ENCODE measurements at regions of chr11 and their contacts with region 1.

Region 1: GRCh38 chr11:79708300-79708932 is 267.6 kb upstream of the TENM4 start:
- DNase-seq: peak; percentile 62 to 71
- H3K4me3 ChIP-seq: no peak overlapping the region
- H3K4me3 Mint-ChIP-seq: no peak overlapping the region
- H3K27ac Mint-ChIP-seq: no peak overlapping the region
- H3K4me1 ChIP-seq: no peaks in the 10 kb centered on the region
- H3K4me1 Mint-ChIP-seq: no peaks in the 10 kb centered on the region
- H3K27me3 ChIP-seq: no peaks in the 10 kb centered on the region
- H3K27me3 Mint-ChIP-seq: no peaks in the 10 kb centered on the region
- CTCF ChIP-seq: peak; percentile 77 to 84

Region 2: GRCh38 chr11:79686703-79687414 is 21.6 kb before region 1 on chr11:
- CTCF ChIA-PET with region 1: no interaction called
- POLR2A ChIA-PET with region 1: no interaction called
- intact Hi-C with region 1: no loop called
- DNase-seq: no peak
- H3K4me3 ChIP-seq: no peak overlapping the region
- H3K4me3 Mint-ChIP-seq: no peak overlapping the region
- H3K27ac Mint-ChIP-seq: no peak overlapping the region
- H3K4me1 ChIP-seq: no peaks in the 10 kb centered on the region
- H3K4me1 Mint-ChIP-seq: no peaks in the 10 kb centered on the region
- H3K27me3 ChIP-seq: no peaks in the 10 kb centered on the region
- H3K27me3 Mint-ChIP-seq: peaks cover 2% of the 10 kb centered on the region
- CTCF ChIP-seq: no peak

Region 3: DNA sequence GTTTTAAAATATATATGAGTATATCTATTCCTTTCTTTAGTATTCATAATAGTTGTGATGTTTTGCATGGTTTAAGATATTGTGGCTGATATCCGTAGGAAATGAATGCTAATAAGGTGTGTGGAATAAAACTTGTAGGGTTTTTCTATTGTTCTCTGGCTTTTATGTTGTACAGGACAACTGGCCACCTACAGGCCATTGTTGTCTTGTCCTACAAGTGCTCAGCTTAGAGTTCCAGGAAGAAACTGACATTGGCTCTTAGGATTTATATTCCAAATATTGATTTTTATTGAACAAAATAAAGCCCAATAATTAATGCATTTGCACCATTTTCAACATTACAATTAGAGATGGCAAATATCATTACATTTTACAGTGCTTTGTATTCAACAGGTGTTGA is 245.2 kb after region 1 on chr11:
- CTCF ChIA-PET with region 1: no interaction called
- POLR2A ChIA-PET with region 1: no interaction called
- intact Hi-C with region 1: loop called (anchors 10 kb)
- DNase-seq: no peak
- H3K4me3 ChIP-seq: no peak overlapping the region
- H3K4me3 Mint-ChIP-seq: no peak overlapping the region
- H3K27ac Mint-ChIP-seq: no peak overlapping the region
- H3K4me1 ChIP-seq: no peaks in the 10 kb centered on the region
- H3K4me1 Mint-ChIP-seq: no peaks in the 10 kb centered on the region
- H3K27me3 ChIP-seq: no peaks in the 10 kb centered on the region
- H3K27me3 Mint-ChIP-seq: peaks cover 2% of the 10 kb centered on the region
- CTCF ChIP-seq: peak in 1 of 2 experiments; percentile 42

Region 4: DNA sequence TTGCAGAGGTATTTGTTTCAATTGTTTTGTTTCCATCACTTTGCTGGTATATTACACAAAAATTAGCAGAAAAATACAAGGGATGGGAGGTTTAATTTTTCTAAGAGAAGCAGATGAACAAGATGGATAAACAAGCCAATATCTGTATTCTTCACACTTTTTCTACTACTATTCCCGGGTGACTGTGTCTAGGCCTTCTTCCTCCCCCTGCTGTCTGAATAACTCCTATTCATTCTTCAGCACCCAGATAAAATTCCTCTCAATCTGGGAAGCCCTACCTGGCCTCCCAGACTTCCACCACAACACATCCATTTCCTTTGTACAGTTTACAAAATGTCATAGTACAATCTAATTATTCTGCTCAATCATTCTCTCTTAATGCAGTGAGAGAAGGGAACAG is 399.0 kb after region 1 on chr11:
- CTCF ChIA-PET with region 1: no interaction called
- POLR2A ChIA-PET with region 1: no interaction called
- intact Hi-C with region 1: loop called (anchors 1 kb)
- DNase-seq: no peak
- H3K4me3 ChIP-seq: no peak overlapping the region
- H3K4me3 Mint-ChIP-seq: no peak overlapping the region
- H3K27ac Mint-ChIP-seq: no peak overlapping the region
- H3K4me1 ChIP-seq: no peaks in the 10 kb centered on the region; the same call in 1 of the 2 replicates
- H3K4me1 Mint-ChIP-seq: no peaks in the 10 kb centered on the region
- H3K27me3 ChIP-seq: no peaks in the 10 kb centered on the region
- H3K27me3 Mint-ChIP-seq: peaks cover 11% of the 10 kb centered on the region
- CTCF ChIP-seq: peak in 1 of 2 experiments; percentile 24

Region 5: DNA sequence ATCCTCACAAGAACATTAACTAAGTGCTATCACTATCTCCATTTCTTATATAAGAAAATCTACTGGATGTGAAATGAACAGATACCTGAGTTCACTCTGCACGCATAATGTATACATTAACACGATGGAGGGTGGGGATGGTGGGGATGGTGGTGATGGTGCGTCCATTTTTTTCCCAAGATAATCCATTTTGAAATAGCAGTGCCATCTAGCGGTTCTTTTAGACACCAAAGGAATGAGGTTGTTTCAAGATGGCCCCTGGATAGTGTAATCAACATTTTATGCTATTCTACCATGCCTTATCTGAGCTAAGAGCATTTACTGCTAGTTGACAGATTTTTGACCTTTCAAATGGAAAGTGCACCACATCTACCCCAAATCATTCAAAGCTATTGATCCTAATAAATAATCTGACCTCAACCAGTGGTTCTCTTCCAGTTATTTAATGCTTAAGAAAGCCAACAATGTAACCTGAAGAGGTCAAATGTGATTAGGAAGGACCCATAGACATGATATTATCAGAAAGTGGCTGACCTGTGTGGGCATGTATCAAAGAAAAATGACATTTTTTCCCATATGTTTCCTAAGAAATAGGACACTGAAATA is 447.1 kb after region 1 on chr11:
- CTCF ChIA-PET with region 1: interaction called, 3 read pairs
- POLR2A ChIA-PET with region 1: no interaction called
- intact Hi-C with region 1: loop called (anchors 1 kb)
- DNase-seq: peak in 1 of 2 experiments; percentile 63
- H3K4me3 ChIP-seq: no peak overlapping the region
- H3K4me3 Mint-ChIP-seq: no peak overlapping the region
- H3K27ac Mint-ChIP-seq: no peak overlapping the region
- H3K4me1 ChIP-seq: no peaks in the 10 kb centered on the region
- H3K4me1 Mint-ChIP-seq: no peaks in the 10 kb centered on the region
- H3K27me3 ChIP-seq: no peaks in the 10 kb centered on the region
- H3K27me3 Mint-ChIP-seq: peaks cover 5% of the 10 kb centered on the region
- CTCF ChIP-seq: peak; percentile 61 to 73

Region 6: DNA sequence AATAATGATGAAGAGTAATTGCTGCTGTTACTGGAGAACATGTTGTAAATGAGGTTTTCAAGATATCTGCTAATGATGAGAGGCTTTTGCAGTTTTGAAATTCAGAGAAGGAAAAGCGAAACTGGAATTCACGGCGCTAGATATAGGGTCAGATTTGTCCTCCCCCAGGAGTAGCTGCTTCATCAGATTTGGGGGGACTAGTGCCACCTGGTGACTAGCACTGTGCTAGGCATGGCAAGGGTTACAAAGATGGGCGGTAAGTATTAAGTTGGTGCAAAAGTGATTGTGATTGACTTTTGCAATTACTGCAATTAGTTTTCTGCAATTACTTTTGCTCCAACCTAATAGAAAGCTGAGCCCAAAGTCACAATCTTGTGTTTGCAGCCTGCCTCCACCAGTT is 612.3 kb after region 1 on chr11:
- CTCF ChIA-PET with region 1: no interaction called
- POLR2A ChIA-PET with region 1: no interaction called
- intact Hi-C with region 1: loop called (anchors 5 kb)
- DNase-seq: no peak
- H3K4me3 ChIP-seq: no peak overlapping the region
- H3K4me3 Mint-ChIP-seq: no peak overlapping the region
- H3K27ac Mint-ChIP-seq: no peak overlapping the region
- H3K4me1 ChIP-seq: no peaks in the 10 kb centered on the region
- H3K4me1 Mint-ChIP-seq: no peaks in the 10 kb centered on the region
- H3K27me3 ChIP-seq: no peaks in the 10 kb centered on the region; the same call in 1 of the 2 replicates
- H3K27me3 Mint-ChIP-seq: peaks cover 19% of the 10 kb centered on the region
- CTCF ChIP-seq: no peak

Region 7: GRCh38 chr11:81005595-81005994 is 1297.2 kb after region 1 on chr11:
- CTCF ChIA-PET with region 1: no interaction called
- POLR2A ChIA-PET with region 1: no interaction called
- intact Hi-C with region 1: loop called (anchors 5 kb)
- DNase-seq: peak in 1 of 2 experiments; percentile 17
- H3K4me3 ChIP-seq: no peak overlapping the region
- H3K4me3 Mint-ChIP-seq: no peak overlapping the region
- H3K27ac Mint-ChIP-seq: no peak overlapping the region
- H3K4me1 ChIP-seq: peaks cover 8% of the 10 kb centered on the region; the same call in 1 of the 2 replicates
- H3K4me1 Mint-ChIP-seq: peaks cover 7% of the 10 kb centered on the region
- H3K27me3 ChIP-seq: no peaks in the 10 kb centered on the region
- H3K27me3 Mint-ChIP-seq: peaks cover 4% of the 10 kb centered on the region
- CTCF ChIP-seq: no peak

Measured in Caco-2 (cell line).